Activated CD8-positive, alpha-beta T cell treated with anti-CD3 and anti-CD28 coated beads for 36 hours (primary cell): ENCODE measurements at regions of chr22 and their contacts with region 1.

Region 1: DNA sequence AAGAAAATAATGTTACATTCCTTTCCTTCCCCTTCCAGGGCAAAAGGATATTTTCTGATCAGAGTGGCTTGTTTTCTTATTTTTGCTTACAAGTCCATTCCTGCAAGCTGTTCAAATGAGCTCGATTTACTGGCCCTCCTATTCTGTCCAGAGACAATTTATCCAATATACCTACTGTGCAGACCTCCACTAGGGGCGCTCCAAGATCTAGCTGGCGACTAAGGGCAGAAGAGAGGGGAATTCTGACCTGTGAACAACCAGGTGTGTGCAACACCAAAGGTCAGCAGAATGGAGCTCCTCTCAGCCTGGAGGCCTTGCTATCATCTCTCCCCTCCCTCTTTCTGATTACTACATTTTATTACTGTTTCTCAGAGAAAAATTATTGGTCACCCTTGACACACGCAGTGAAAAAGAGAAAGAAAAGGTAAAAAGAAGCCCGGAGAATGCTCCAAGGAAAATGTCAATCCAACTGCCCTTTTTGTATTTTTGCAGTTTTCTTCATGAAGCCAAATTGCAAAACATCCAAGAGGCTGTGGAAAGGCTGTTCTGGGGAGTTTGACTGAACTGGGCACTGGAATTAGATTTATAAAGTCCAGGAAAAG is 3.2 kb downstream of the SEZ6L start:
- DNase-seq: peak; percentile 57
- ATAC-seq: no peak
- H3K4me3 Mint-ChIP-seq: no peak overlapping the region
- H3K27ac Mint-ChIP-seq: no peak overlapping the region
- H3K4me1 Mint-ChIP-seq: no peaks in the 10 kb centered on the region
- H3K27me3 Mint-ChIP-seq: peaks cover 56% of the 10 kb centered on the region
- CTCF ChIP-seq: peak; percentile 71

Region 2: DNA sequence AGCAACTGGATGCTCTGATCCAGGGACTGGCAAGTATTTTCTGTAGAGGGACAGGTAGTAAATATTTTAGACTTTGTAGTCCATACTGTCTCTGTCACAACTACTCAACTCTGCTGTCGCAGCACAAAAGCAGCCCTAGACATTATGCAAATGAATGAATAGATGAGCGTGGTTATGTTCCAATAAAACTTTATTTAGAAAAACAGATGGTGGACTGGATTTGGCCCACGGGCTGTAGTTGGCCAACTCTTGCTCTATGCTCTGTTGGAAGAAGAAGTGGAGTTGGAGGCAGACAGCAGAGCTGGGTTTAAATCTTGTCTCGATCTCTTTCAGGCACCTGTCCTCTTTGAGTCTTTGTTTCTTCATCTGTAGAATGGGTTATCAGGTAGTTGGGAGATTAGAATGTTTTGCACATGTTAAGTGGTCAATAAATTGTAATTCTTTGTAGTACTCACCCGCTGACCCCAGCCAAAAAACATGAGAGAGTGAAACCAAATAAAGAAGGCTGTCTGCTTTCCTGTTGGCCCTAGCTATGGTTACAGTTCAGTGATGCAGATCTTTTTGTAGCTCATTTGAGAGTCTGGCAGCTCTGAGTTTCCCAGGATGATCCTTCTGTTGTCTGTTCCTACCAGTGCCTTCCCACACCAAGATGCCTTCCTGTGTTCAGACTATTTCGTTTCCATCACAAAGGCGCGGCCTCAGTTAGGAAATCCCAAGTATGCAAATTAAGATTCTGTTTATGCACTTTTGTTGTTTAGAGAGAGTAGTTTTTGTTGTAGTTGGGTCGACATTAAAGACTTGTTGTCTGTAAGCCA is 201.3 kb before region 1 on chr22:
- CTCF ChIA-PET with region 1: no interaction called
- POLR2A ChIA-PET with region 1: no interaction called
- intact Hi-C with region 1: no loop called
- DNase-seq: no peak
- ATAC-seq: no peak
- H3K4me3 Mint-ChIP-seq: no peak overlapping the region
- H3K27ac Mint-ChIP-seq: no peak overlapping the region
- H3K4me1 Mint-ChIP-seq: peaks cover 8% of the 10 kb centered on the region
- H3K27me3 Mint-ChIP-seq: peaks cover 2% of the 10 kb centered on the region
- CTCF ChIP-seq: no peak

Region 3: GRCh38 chr22:26161746-26162145 is 10.7 kb before region 1 on chr22:
- CTCF ChIA-PET with region 1: interaction called, 12 read pairs
- POLR2A ChIA-PET with region 1: no interaction called
- intact Hi-C with region 1: no loop called
- DNase-seq: no peak
- ATAC-seq: no peak
- H3K4me3 Mint-ChIP-seq: no peak overlapping the region
- H3K27ac Mint-ChIP-seq: no peak overlapping the region
- H3K4me1 Mint-ChIP-seq: no peaks in the 10 kb centered on the region
- H3K27me3 Mint-ChIP-seq: peaks cover 23% of the 10 kb centered on the region
- CTCF ChIP-seq: no peak

Region 4: GRCh38 chr22:26213826-26214225 is 41.3 kb after region 1 on chr22:
- CTCF ChIA-PET with region 1: no interaction called
- POLR2A ChIA-PET with region 1: no interaction called
- intact Hi-C with region 1: no loop called
- DNase-seq: no peak
- ATAC-seq: no peak
- H3K4me3 Mint-ChIP-seq: no peak overlapping the region
- H3K27ac Mint-ChIP-seq: no peak overlapping the region
- H3K4me1 Mint-ChIP-seq: no peaks in the 10 kb centered on the region
- H3K27me3 Mint-ChIP-seq: peaks cover 24% of the 10 kb centered on the region
- CTCF ChIP-seq: no peak

Region 5: DNA sequence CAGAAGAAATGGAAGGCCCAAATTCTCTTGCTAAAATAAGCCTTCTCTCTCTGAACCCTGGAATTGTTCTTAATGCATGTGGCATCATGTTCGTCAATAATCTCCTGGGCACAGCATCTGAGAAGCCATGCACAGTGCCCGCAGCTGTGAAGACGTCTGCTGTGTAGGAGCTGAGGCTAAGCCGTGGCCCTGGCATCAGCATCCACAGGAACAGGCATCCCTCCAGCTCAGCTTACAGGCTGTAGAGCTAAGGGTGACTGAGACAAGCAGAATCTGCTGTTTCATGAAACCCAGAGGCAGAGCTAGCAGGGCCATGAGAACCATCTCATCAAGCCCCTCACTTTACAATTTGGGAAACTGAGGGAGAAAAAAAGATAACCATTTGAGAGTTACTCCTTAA is 57.4 kb after region 1 on chr22:
- CTCF ChIA-PET with region 1: no interaction called
- POLR2A ChIA-PET with region 1: interaction called, 3 read pairs
- intact Hi-C with region 1: loop called (anchors 10 kb)
- DNase-seq: no peak
- ATAC-seq: no peak
- H3K4me3 Mint-ChIP-seq: no peak overlapping the region
- H3K27ac Mint-ChIP-seq: no peak overlapping the region
- H3K4me1 Mint-ChIP-seq: no peaks in the 10 kb centered on the region
- H3K27me3 Mint-ChIP-seq: peaks cover 3% of the 10 kb centered on the region
- CTCF ChIP-seq: no peak